Dendritic cell treated with granulocyte-macrophage colony-stimulating factor and Interleukin-4, amounts not matched to agents 40 ng/mL and 50 ng/mL, for 4 days (primary cell): ENCODE measurements at regions of chr16 and their contacts with region 1.

Region 1: DNA sequence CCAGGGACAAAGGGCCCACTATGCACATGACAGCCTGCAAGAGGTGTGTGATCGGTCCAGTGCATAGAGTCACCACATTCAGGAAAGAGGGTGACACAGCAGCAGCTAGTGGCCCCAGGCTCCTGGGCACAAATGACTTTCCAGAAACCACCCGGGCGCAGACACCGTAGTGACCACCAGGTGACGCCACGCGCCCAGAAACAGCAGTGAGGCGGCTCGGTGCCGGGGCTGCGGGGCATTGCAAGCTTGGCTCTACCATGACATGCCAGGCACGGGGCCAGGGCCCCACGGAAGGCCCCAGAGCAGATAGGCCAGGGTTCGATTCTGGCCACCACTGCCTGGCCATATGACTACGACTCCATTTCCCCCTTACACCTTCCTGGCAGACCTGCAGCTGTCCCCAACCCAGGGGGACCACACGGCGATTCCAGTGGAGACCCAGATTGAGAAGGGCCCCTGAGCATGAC is 6.7 kb downstream of the RHBDF1 start:
- H3K4me3 Mint-ChIP-seq: no peak overlapping the region
- H3K27ac Mint-ChIP-seq: no peak overlapping the region
- H3K4me1 Mint-ChIP-seq: peaks cover 8% of the 10 kb centered on the region
- H3K27me3 Mint-ChIP-seq: peaks cover 56% of the 10 kb centered on the region

Region 2: DNA sequence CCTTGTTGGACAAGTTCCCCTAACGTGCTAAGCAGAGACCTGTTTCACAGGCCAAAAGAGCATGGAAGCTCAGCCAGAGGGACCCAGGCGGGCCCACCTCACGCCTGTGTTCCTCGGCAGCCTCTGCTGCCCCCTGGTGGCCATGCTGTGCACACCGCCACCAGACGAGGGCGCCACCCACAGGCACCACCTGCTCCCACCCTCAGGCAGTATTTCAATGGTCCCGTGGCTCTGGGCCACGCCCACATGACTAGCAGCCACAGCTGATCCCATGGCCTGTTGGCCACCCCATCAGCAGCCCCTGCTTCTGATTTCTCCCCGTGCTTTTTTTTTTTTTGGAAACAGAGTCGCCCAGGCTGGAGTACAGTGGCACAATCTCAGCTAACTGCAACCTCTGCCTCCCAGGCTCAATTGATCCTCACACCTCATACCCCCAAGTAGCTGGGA is 31.3 kb after region 1 on chr16:
- intact Hi-C with region 1: loop called (anchors 1 kb)
- H3K4me3 Mint-ChIP-seq: no peak overlapping the region
- H3K27ac Mint-ChIP-seq: peak overlapping the region; percentile 27
- H3K4me1 Mint-ChIP-seq: peaks cover 10% of the 10 kb centered on the region
- H3K27me3 Mint-ChIP-seq: no peaks in the 10 kb centered on the region

Region 3: GRCh38 chr16:252366-253337 is 186.9 kb after region 1 on chr16:
- intact Hi-C with region 1: no loop called
- H3K4me3 Mint-ChIP-seq: peak overlapping the region; percentile 64
- H3K27ac Mint-ChIP-seq: peak overlapping the region; percentile 47
- H3K4me1 Mint-ChIP-seq: peaks cover 10% of the 10 kb centered on the region
- H3K27me3 Mint-ChIP-seq: no peaks in the 10 kb centered on the region